ENCODE measurements at regions of chr18 and their contacts with region 1.

Region 1: GRCh38 chr18:3665780-3666525 is 216.0 kb downstream of the TGIF1 start:
- DNase-seq: peak; percentile 50 to 77 (median 59)
- H3K4me3 ChIP-seq: no peak overlapping the region
- H3K4me3 Mint-ChIP-seq: peak overlapping the region in 3 of 7 donors; percentile 38 to 57 (median 45)
- H3K27ac ChIP-seq: peak overlapping the region; percentile 34
- H3K27ac Mint-ChIP-seq: peak overlapping the region in 2 of 8 donors; percentile 43 to 60
- H3K4me1 ChIP-seq: peaks cover 9% of the 10 kb centered on the region
- H3K4me1 Mint-ChIP-seq: peaks cover 0 to 9% (median 3%) of the 10 kb centered on the region in 3 donors
- H3K27me3 ChIP-seq: no peaks in the 10 kb centered on the region
- H3K27me3 Mint-ChIP-seq: peaks cover 4 to 11% of the 10 kb centered on the region in 2 donors

Region 2: GRCh38 chr18:3297025-3297984 is 368.6 kb before region 1 on chr18:
- CTCF ChIA-PET with region 1: interaction called, 21 read pairs
- POLR2A ChIA-PET with region 1: no interaction called
- DNase-seq: peak; percentile 83 to 95 (median 86)
- H3K4me3 ChIP-seq: peak overlapping the region; percentile 92
- H3K4me3 Mint-ChIP-seq: peak overlapping the region; percentile 92 to 98 (median 95)
- H3K27ac ChIP-seq: peak overlapping the region; percentile 80
- H3K27ac Mint-ChIP-seq: peak overlapping the region; percentile 31 to 93 (median 86)
- H3K4me1 ChIP-seq: peaks cover 12% of the 10 kb centered on the region
- H3K4me1 Mint-ChIP-seq: peaks cover 8 to 12% (median 11%) of the 10 kb centered on the region in 3 donors
- H3K27me3 ChIP-seq: peaks cover 5% of the 10 kb centered on the region
- H3K27me3 Mint-ChIP-seq: peaks cover 8 to 34% of the 10 kb centered on the region in 2 donors

Region 3: DNA sequence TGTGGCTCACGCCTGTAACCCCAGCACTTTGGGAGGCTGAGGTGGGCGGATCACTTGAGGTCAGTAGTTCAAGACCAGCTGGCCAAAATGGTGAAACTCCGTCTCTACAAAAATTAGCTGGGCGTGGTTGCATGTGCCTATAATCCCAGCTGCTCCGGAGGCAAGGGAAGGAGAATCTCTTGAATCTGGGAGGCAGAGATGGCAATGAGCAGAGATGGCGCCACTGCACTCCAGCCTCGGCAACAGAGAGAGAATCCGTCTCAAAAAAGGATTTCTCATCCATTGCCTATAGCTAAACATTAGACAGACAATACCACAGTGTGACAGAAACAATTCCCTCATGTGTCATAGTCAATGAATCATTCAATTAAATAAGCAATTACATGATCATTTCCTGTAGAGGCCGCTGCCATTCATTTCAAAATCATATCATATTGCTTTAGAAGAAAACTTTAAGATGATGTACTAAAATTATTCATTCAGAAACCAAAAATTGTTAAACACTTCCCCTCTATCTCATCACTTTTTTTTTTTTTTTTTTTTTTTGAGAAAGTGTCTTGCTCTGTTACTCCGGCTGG is 285.5 kb before region 1 on chr18:
- CTCF ChIA-PET with region 1: interaction called, 16 read pairs
- POLR2A ChIA-PET with region 1: no interaction called
- DNase-seq: peak in 1 of 5 donors; percentile 24
- H3K4me3 ChIP-seq: no peak overlapping the region
- H3K4me3 Mint-ChIP-seq: no peak overlapping the region
- H3K27ac ChIP-seq: no peak overlapping the region
- H3K27ac Mint-ChIP-seq: peak overlapping the region in 1 of 8 donors; percentile 42
- H3K4me1 ChIP-seq: no peaks in the 10 kb centered on the region
- H3K4me1 Mint-ChIP-seq: no peaks in the 10 kb centered on the region
- H3K27me3 ChIP-seq: no peaks in the 10 kb centered on the region
- H3K27me3 Mint-ChIP-seq: peaks cover 8 to 21% of the 10 kb centered on the region in 2 donors

Region 4: DNA sequence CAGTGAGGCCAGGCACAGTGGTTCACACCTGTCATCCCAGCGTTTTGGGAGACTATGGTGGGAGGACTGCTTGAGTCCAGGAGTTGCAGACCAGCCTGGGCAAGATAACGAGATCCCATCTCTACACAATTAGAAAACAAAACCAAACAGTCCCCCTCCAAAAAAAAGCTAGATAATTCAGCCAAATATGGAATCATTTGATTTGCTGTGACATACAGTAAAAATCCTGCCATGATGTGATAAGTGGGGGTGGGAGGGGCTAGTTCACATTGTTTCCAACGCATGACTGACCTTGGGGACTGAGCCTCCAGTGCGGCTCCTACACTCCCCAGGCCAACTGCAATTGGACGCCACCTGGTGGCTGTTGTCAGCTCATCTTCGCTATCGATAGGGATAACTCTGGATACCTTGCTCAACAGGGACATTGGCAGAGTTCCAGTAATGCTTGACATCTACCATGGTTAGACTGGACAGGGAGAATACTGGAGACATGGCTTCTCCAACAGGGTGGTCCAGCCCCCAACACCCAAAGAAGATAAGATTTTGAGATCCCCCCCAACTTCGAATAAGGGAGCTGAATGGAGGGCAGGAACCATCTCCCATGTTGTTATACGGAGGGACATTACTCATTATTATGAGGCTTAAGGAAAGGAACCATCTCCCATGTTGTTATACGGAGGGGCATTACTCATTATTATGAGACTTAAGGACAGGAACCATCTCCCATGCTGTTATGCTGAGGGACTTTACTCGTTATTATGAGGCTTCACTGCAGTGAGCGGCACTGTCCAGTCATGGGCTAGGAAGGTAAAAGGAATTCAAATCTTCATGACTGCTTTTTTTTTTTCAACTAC is 80.1 kb before region 1 on chr18:
- CTCF ChIA-PET with region 1: interaction called, 17 read pairs
- POLR2A ChIA-PET with region 1: no interaction called
- DNase-seq: peak; percentile 40 to 78 (median 59)
- H3K4me3 ChIP-seq: no peak overlapping the region
- H3K4me3 Mint-ChIP-seq: peak overlapping the region in 3 of 7 donors; percentile 20 to 53 (median 21)
- H3K27ac ChIP-seq: peak overlapping the region; percentile 27
- H3K27ac Mint-ChIP-seq: peak overlapping the region in 6 of 8 donors; percentile 1 to 53 (median 43)
- H3K4me1 ChIP-seq: no peaks in the 10 kb centered on the region
- H3K4me1 Mint-ChIP-seq: peaks cover 9 to 14% (median 13%) of the 10 kb centered on the region in 3 donors
- H3K27me3 ChIP-seq: no peaks in the 10 kb centered on the region
- H3K27me3 Mint-ChIP-seq: peaks cover 0 to 1% of the 10 kb centered on the region in 2 donors

Region 5: DNA sequence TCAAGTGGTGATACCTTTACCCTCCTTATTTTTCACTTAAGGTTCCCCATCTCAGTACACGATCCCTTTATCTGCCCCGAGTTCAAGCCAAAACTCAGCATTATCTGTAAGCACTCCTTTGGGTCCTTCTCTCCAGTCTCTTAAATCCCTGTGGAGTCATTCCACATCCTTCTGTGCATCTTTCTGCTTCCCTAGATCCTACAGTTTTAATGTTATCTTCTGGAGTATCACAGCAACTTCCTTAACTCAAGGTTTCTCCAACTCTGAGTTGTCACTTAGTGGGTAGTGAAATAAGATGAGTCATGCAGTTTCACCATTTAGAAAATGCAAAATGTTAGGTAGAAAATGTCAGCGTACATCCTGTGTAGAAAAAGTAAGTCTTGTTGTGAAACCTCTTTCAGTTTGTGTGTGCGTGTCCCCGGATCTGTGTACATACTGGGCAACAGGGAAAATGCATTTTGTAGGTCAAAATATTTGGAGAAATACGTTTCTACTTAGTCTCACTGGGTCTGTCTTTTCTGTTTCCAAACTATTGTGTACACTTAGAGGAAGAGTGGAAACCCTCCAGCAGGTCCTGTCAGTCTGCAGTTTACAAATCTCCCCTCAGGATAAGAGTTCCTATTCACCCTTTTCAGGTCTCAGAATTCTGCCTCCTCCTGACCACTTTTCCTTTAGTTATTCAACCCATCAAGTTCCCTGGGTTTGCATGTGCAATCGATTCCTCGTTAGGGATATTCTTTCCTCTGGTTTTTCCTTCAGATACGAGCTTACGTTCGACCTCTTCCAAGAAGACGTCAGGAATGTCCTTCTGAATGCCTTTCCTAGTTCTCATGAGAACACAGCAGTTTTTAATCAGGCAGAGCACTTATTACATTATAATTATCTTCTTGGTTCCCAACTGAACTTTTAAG is 61.2 kb before region 1 on chr18:
- CTCF ChIA-PET with region 1: interaction called, 15 read pairs
- POLR2A ChIA-PET with region 1: interaction called, 6 read pairs
- DNase-seq: peak in 2 of 5 donors; percentile 38 to 48
- H3K4me3 ChIP-seq: peak overlapping the region; percentile 57
- H3K4me3 Mint-ChIP-seq: no peak overlapping the region
- H3K27ac ChIP-seq: peak overlapping the region; percentile 94
- H3K27ac Mint-ChIP-seq: no peak overlapping the region
- H3K4me1 ChIP-seq: peaks cover 44% of the 10 kb centered on the region
- H3K4me1 Mint-ChIP-seq: peaks cover 13 to 15% (median 15%) of the 10 kb centered on the region in 3 donors
- H3K27me3 ChIP-seq: no peaks in the 10 kb centered on the region
- H3K27me3 Mint-ChIP-seq: no peaks in the 10 kb centered on the region